ENCODE measurements at regions of chr11 and their contacts with region 1.

Region 1: DNA sequence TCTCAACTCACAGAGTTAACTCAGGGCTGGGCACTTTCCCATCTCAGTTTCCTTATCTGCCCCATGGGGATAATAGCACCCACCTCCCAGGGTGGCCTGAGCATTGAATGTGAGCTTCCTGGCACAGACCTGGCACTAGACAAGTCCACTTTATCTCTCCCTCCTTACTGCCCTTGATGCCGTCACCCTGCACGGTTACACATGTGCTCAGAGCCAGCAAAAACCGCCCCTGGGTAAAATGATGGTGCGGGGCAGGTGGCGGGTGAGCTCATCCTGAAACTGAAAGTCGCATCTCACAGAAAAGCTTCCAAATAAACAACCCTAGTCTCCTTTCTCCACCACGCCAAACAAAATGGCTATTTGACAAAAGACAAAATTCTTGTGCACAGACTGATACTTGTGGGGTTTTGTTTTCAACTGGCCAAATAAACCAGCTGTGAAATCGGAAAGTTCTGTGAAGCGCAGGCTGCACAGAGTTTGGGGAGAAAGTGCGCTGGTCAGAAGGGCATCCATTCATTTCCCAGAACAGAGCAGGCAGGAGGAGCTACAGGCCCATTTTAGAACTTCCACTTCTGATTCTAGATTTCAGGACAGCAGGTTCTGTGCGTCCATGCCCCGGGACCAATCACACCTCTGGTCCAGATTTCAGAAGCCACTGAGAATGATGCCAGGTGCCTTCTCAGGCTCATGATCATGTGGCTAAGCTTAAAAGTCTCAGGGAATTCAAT is 138.1 kb downstream of the SHANK2 start:
- DNase-seq: peak in 26 of 42 donors; percentile 17 to 74 (median 40)

Region 2: DNA sequence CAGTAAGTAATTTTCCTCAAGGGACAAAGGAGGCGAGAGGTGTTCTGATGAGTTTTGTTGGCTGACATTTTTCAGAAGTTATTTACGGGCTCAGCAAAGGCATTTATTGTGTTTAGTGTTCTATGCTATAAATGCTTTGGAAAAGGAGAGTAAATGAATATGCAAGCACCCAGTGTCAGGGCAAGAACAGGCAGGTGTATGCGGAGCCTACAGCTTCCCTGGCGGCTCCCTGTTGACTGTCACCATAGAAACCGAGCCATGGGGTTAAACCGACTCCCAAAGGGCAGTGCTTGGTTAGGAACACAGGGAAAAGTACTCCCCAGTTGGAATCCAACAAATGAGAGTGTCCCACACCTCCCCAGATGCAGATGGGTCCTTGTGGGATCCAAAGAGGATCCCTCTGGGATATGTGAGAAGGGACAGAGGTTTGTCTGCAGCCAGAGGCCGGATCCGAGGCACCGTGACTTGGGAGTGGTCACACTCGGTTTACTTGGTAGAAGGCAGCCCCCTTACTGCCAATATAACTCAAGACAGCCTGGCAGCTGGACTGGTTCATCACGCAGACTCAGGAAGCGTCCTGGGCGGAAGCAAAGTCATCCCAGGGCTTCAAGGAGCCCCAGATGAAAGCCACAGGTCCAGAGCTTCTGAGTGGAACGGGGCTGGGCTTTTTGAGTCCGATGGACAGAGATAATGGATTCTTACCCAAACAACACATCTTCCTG is 386.2 kb before region 1 on chr11:
- intact Hi-C with region 1: no loop called
- DNase-seq: no peak

Region 3: GRCh38 chr11:71086675-71087258 is 27.5 kb before region 1 on chr11:
- intact Hi-C with region 1: no loop called
- DNase-seq: peak; percentile 14 to 72 (median 46)

Region 4: DNA sequence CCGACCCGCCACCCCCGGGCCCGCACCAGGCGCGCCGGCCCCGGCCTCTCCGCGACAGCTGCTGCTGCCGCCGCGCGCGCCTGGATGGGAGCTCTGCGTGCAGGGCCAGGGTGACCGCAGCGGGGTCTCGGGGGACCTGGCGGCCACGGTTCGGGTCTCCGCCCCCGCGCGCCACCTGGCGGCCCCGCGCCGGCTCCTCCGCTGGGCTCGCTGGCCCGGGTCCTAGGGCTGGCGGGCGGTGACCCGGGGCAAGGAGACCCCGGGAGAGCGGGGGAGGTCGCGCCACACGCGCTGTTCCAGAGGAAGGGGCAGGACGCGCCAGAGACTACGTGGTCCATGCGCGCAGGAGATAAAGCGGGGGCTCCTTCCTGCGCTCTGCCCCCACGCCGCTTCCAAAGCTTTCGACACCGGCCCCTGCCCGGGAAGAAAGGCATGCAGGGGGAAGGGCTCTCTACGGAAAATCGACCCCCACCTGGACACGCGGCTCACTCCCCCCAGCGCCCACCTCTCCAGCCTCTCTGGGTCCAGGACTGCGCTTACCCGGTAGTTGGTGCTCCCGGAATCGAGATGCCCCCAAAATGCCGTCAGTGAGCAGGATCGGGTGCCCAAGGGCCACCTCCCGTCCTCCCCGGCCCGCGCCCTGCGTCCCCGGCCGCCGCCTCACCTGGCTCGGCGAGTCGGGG is 137.6 kb after region 1 on chr11:
- intact Hi-C with region 1: loop called (anchors 10 kb)
- DNase-seq: peak in 11 of 42 donors; percentile 7 to 56 (median 39)

Region 5: GRCh38 chr11:71364176-71364671 is 249.9 kb after region 1 on chr11:
- intact Hi-C with region 1: loop called (anchors 10 kb)
- DNase-seq: peak in 39 of 42 donors; percentile 15 to 83 (median 59)